ENCODE measurements at regions of chr9 and their contacts with region 1.

Region 1: DNA sequence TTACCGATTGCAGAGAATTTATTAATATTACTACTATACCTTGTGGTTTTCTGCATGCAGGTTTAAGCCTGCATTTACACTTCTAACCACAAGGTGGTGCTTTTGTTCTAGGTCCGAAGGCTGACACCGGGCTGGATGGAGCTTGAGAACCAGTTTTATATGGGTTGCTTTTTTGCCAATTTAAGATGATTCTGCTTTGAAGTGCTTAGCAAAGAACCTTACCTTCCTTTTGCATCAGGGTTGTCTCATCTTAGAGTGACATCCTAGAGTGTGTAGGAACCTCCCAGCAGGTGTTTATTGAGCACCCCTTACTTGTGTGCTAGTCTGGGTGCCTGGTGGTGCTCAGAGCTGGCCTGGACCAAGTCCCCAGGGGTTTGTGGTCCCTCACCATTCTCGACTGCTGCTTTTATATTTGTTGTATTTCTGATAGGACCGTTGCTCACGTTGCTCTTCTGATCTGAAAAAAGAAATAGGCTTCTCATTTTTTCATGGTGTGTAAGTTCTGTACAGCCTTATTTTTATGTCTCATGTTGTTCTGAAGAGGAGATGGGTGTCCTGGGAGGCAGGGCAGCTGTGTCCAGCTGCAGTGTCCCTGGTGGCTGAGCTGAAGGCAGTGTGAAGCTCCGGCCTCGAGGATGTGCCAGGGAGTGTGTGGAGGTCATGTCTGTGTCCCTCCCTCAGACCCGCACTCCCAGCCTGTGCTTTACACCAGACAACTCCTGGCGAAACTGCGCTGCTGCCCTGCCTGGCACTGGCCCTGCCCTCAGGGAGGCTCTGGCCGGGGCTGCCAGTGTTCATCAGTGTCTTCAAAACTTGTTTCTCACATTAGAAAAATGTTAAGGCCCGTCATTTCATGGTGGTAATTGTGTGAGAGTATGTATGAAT is 54.3 kb downstream of the EHMT1 start:
- DNase-seq: no peak
- ATAC-seq: peak; percentile 48 to 69 (median 58)
- H3K4me3 ChIP-seq: no peak overlapping the region
- H3K27ac ChIP-seq: no peak overlapping the region
- H3K4me1 ChIP-seq: peaks cover 21% of the 10 kb centered on the region
- H3K27me3 ChIP-seq: no peaks in the 10 kb centered on the region
- CTCF ChIP-seq: peak; percentile 90

Region 2: GRCh38 chr9:137632230-137633161 is 40.7 kb before region 1 on chr9:
- intact Hi-C with region 1: no loop called
- DNase-seq: no peak
- ATAC-seq: peak; percentile 37 to 63 (median 60)
- H3K4me3 ChIP-seq: no peak overlapping the region
- H3K27ac ChIP-seq: peak overlapping the region; percentile 24
- H3K4me1 ChIP-seq: peaks cover 30% of the 10 kb centered on the region
- H3K27me3 ChIP-seq: no peaks in the 10 kb centered on the region
- CTCF ChIP-seq: no peak

Region 3: GRCh38 chr9:137772281-137772873 is 99.2 kb after region 1 on chr9:
- intact Hi-C with region 1: loop called (anchors 2 to 5 kb)
- DNase-seq: no peak
- ATAC-seq: peak in 3 of 4 donors; percentile 38 to 66 (median 60)
- H3K4me3 ChIP-seq: no peak overlapping the region
- H3K27ac ChIP-seq: no peak overlapping the region
- H3K4me1 ChIP-seq: no peaks in the 10 kb centered on the region
- H3K27me3 ChIP-seq: no peaks in the 10 kb centered on the region
- CTCF ChIP-seq: peak; percentile 22